Lower leg skin (tissue), 4 donors: ENCODE measurements at regions of chr9 and their contacts with region 1.

Region 1: GRCh38 chr9:8946461-8946860 is 1146.9 kb upstream of the DMAC1 start:
- DNase-seq: no peak
- H3K4me3 ChIP-seq: no peak overlapping the region
- CTCF ChIP-seq: no peak
- POLR2A ChIP-seq: no peak

Region 2: GRCh38 chr9:7212101-7212500 is 1734.4 kb before region 1 on chr9:
- intact Hi-C with region 1: loop called (anchors 5 kb)
- DNase-seq: no peak
- H3K4me3 ChIP-seq: no peak overlapping the region
- CTCF ChIP-seq: no peak
- POLR2A ChIP-seq: no peak

Region 3: GRCh38 chr9:8917956-8918739 is 28.3 kb before region 1 on chr9:
- intact Hi-C with region 1: no loop called
- DNase-seq: no peak
- H3K4me3 ChIP-seq: no peak overlapping the region
- CTCF ChIP-seq: no peak
- POLR2A ChIP-seq: no peak

Region 4: GRCh38 chr9:8961186-8961851 is 14.9 kb after region 1 on chr9:
- intact Hi-C with region 1: no loop called
- DNase-seq: peak in 1 of 2 donors; percentile 14
- H3K4me3 ChIP-seq: no peak overlapping the region
- CTCF ChIP-seq: no peak
- POLR2A ChIP-seq: no peak

Region 5: DNA sequence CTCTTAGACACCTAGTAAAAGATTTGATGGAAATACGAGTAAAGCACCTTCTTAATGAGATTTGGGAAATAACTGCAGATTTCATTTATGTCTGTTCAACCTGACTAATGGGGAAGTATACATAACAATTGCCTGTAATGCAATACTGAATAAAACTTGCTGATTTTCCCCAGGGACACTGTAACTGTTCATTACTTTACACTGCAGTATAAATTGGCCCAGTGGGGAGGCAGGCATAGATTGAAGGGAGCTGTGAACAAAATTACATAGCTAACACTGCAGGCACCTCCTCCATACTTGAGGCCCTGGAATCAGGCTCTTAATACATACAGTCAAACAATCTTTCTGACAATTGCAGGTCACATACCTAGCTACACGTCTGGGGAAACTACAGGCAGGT is 1450.2 kb after region 1 on chr9:
- intact Hi-C with region 1: no loop called
- DNase-seq: no peak
- H3K4me3 ChIP-seq: no peak overlapping the region
- CTCF ChIP-seq: no peak
- POLR2A ChIP-seq: no peak